Common myeloid progenitor, CD34-positive (primary cell): ENCODE measurements at regions of chr5 and their contacts with region 1.

Region 1: DNA sequence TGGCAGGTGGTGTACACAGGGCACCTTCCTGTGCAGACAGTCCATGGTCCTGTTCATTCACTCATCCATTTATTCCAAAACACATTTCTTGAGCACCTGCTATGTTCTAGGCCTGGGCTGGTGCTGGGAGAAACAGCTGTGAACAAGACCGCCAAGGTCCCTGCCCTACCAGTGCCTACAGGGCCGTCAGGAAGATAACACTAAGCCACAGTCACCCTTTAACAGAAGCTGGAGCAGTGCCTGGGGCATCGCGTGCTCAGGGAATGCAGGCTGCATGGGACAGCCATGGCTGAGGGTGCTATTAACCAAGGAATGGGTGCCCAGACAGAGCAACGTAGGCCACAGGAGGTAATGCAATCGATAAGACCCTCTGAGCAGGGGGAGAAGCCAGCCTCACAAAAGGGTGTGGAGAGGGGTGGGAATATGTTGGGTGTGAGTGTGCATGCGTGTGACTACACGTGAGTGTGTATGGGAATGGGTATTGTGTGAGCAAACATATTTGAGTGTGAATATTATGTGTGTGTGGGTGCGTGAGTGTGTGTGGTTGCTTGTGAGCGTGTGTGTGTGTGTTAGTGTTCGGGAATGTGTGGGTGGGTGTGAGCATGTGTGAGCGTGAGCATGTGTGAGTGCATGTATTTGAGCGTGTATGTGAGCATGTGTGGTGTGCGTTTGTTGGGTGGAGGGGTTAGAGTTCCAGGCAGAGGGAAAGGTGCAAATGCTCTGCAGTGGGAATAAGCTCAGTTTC is 19.1 kb downstream of the DUSP1 start:
- DNase-seq: no peak
- H3K4me3 ChIP-seq: peak overlapping the region in 1 of 7 experiments; percentile 25
- H3K27ac ChIP-seq: peak overlapping the region in 1 of 2 experiments; percentile 3
- H3K4me1 ChIP-seq: peaks cover 0 to 29% (median 27%) of the 10 kb centered on the region in 4 experiments
- H3K27me3 ChIP-seq: no peaks in the 10 kb centered on the region

Region 2: DNA sequence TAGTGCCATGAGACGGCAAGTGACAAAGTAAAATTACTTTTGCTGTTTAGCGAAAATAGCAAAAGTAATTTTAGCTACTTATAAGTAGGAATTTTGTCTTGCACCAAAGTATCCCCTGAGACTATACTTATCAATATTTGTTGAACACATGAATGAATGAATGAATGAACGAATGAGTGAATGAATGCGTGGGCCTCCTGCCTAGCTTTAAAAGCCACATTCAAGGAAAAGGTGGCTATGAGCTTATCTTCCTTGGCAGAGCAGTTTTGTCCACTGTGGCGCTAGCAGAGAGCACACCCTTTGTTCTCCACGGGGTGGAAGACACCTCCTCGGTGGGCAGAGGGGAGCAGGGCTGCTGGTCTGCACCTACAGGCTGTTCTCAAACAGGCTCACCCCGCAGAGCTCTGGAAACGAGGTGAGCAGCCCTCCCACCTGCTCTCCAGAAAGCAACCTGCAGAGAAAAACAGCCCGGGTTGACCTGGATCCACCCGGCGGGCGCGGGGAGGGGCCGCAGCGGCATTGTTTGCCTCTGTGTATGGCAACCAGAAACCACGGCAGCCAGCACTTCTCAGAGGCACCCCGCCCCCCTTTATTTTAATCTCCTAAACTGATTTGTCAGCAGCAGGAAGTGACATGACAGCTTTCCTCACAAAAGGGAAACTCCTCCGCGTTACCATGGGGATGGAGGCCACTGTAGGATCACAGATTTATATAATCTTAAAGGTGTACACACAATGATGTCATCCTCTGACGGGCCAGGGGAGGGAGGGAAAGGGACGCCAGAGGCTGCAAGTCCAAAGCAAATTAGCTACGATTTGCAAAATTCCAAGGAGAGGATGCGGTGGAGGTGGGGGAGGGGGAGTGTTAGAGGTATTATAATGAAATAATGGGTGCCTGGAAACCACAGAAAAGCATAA is 13.2 kb after region 1 on chr5:
- CTCF ChIA-PET with region 1: interaction called, 19 read pairs
- POLR2A ChIA-PET with region 1: interaction called, 9 read pairs
- DNase-seq: peak; percentile 100
- H3K4me3 ChIP-seq: peak overlapping the region in 6 of 7 experiments; percentile 27 to 94 (median 68)
- H3K27ac ChIP-seq: peak overlapping the region; percentile 93 to 97
- H3K4me1 ChIP-seq: peaks cover 12 to 59% (median 40%) of the 10 kb centered on the region in 4 experiments
- H3K27me3 ChIP-seq: no peaks in the 10 kb centered on the region